Aorta (tissue), 5 donors: ENCODE measurements at regions of chr4 and their contacts with region 1.

Region 1: GRCh38 chr4:1746265-1746691 is 25.0 kb downstream of the TACC3 start:
- DNase-seq: peak; percentile 74 to 92
- ATAC-seq: peak; percentile 68
- H3K4me3 ChIP-seq: no peak overlapping the region
- H3K27ac ChIP-seq: no peak overlapping the region
- H3K4me1 ChIP-seq: no peaks in the 10 kb centered on the region
- H3K27me3 ChIP-seq: no peaks in the 10 kb centered on the region

Region 2: GRCh38 chr4:1809754-1810511 is 63.7 kb after region 1 on chr4:
- intact Hi-C with region 1: loop called (anchors 1 to 10 kb)
- DNase-seq: peak in 1 of 2 donors; percentile 87
- ATAC-seq: peak; percentile 78
- H3K4me3 ChIP-seq: no peak overlapping the region
- H3K27ac ChIP-seq: no peak overlapping the region
- H3K4me1 ChIP-seq: no peaks in the 10 kb centered on the region
- H3K27me3 ChIP-seq: no peaks in the 10 kb centered on the region

Region 3: GRCh38 chr4:1899149-1900086 is 153.1 kb after region 1 on chr4:
- intact Hi-C with region 1: loop called (anchors 5 kb)
- DNase-seq: peak; percentile 75 to 87
- ATAC-seq: peak; percentile 77
- H3K4me3 ChIP-seq: no peak overlapping the region
- H3K27ac ChIP-seq: no peak overlapping the region
- H3K4me1 ChIP-seq: no peaks in the 10 kb centered on the region
- H3K27me3 ChIP-seq: no peaks in the 10 kb centered on the region